CD4-positive, alpha-beta memory T cell (primary cell): ENCODE measurements at regions of chrX and their contacts with region 1.

Region 1: GRCh38 chrX:55057675-55058249 is 17.1 kb upstream of the PAGE2B start:
- DNase-seq: peak in 4 of 5 donors; percentile 31 to 41 (median 40)
- H3K4me3 ChIP-seq: no peak overlapping the region
- H3K4me3 Mint-ChIP-seq: peak overlapping the region; percentile 64 to 87 (median 74)
- H3K27ac ChIP-seq: no peak overlapping the region
- H3K27ac Mint-ChIP-seq: peak overlapping the region; percentile 24 to 93 (median 74)
- H3K4me1 ChIP-seq: peaks cover 16% of the 10 kb centered on the region
- H3K4me1 Mint-ChIP-seq: peaks cover 8 to 25% (median 15%) of the 10 kb centered on the region in 4 donors
- H3K27me3 ChIP-seq: no peaks in the 10 kb centered on the region
- H3K27me3 Mint-ChIP-seq: no peaks in the 10 kb centered on the region

Region 2: GRCh38 chrX:54825716-54826438 is 231.9 kb before region 1 on chrX:
- CTCF ChIA-PET with region 1: no interaction called
- POLR2A ChIA-PET with region 1: no interaction called
- intact Hi-C with region 1: loop called (anchors 1 kb)
- DNase-seq: peak in 4 of 5 donors; percentile 5 to 25 (median 21)
- H3K4me3 ChIP-seq: no peak overlapping the region
- H3K4me3 Mint-ChIP-seq: no peak overlapping the region
- H3K27ac ChIP-seq: no peak overlapping the region
- H3K27ac Mint-ChIP-seq: no peak overlapping the region
- H3K4me1 ChIP-seq: no peaks in the 10 kb centered on the region
- H3K4me1 Mint-ChIP-seq: no peaks in the 10 kb centered on the region
- H3K27me3 ChIP-seq: no peaks in the 10 kb centered on the region
- H3K27me3 Mint-ChIP-seq: no peaks in the 10 kb centered on the region

Region 3: GRCh38 chrX:54865208-54865607 is 192.6 kb before region 1 on chrX:
- CTCF ChIA-PET with region 1: no interaction called
- POLR2A ChIA-PET with region 1: no interaction called
- intact Hi-C with region 1: no loop called
- DNase-seq: no peak
- H3K4me3 ChIP-seq: no peak overlapping the region
- H3K4me3 Mint-ChIP-seq: no peak overlapping the region
- H3K27ac ChIP-seq: no peak overlapping the region
- H3K27ac Mint-ChIP-seq: no peak overlapping the region
- H3K4me1 ChIP-seq: no peaks in the 10 kb centered on the region
- H3K4me1 Mint-ChIP-seq: no peaks in the 10 kb centered on the region
- H3K27me3 ChIP-seq: no peaks in the 10 kb centered on the region
- H3K27me3 Mint-ChIP-seq: peaks cover 0 to 2% of the 10 kb centered on the region in 2 donors

Region 4: GRCh38 chrX:54891573-54891972 is 166.2 kb before region 1 on chrX:
- CTCF ChIA-PET with region 1: interaction called, 19 read pairs
- POLR2A ChIA-PET with region 1: no interaction called
- intact Hi-C with region 1: no loop called
- DNase-seq: peak; percentile 31 to 43 (median 37)
- H3K4me3 ChIP-seq: no peak overlapping the region
- H3K4me3 Mint-ChIP-seq: no peak overlapping the region
- H3K27ac ChIP-seq: no peak overlapping the region
- H3K27ac Mint-ChIP-seq: no peak overlapping the region
- H3K4me1 ChIP-seq: no peaks in the 10 kb centered on the region
- H3K4me1 Mint-ChIP-seq: no peaks in the 10 kb centered on the region
- H3K27me3 ChIP-seq: no peaks in the 10 kb centered on the region
- H3K27me3 Mint-ChIP-seq: peaks cover 2 to 9% of the 10 kb centered on the region in 2 donors